ENCODE measurements at regions of chr19 and their contacts with region 1.

Region 1: GRCh38 chr19:40750059-40750873 is at the start of gene ACTMAP:
- DNase-seq: peak; percentile 100
- ATAC-seq: peak; percentile 90
- H3K4me3 Mint-ChIP-seq: peak within 1 kb of the TSS; percentile 94
- H3K27ac Mint-ChIP-seq: peak within 1 kb of the TSS; percentile 99
- H3K4me1 Mint-ChIP-seq: peaks cover 27% of the 10 kb centered on the region
- H3K27me3 Mint-ChIP-seq: no peaks in the 10 kb centered on the region
- CTCF ChIP-seq: no peak
- total RNA-seq, gene ACTMAP: 12.8 to 14.2 TPM

Region 2: DNA sequence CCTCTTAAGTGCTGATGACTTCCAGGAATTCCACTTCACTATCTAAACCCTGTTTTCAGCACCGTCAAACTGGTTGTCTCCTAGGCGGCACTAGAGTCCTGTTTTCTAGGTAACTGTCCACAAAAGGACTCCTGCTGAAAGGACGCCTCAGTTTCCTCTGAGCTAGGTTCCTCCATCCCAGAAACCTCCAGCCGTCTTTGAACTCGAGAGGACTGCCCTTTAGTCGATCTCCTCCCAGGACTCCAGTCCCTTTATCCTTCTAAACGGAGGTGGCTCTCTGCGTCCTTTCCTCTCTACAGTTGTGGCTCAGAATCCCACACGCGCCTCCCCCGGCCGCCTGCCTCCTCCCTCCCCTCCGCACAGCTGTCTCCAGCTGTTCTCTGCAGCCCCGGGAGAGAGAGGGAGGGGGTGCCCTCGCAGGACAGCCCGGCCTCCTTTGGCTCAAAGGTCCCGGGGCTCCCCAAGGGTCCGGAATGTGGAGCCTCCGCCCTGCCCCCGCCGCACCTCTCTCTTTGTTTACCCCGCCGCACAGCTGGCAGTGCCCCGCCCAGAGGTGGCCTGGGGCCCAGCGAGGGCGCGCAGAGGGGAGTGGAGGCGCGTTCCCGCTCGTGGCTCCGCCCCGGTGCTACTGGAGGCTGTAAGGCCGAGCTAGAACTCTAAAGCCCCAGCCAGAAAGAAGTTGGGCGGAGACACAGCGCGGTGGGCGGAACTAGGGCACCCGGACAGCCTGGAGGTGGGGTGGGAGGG is 146.7 kb before region 1 on chr19:
- CTCF ChIA-PET with region 1: no interaction called
- POLR2A ChIA-PET with region 1: no interaction called
- intact Hi-C with region 1: no loop called
- DNase-seq: peak; percentile 99
- ATAC-seq: peak; percentile 78
- H3K4me3 Mint-ChIP-seq: peak overlapping the region; percentile 77
- H3K27ac Mint-ChIP-seq: no peak overlapping the region
- H3K4me1 Mint-ChIP-seq: peaks cover 69% of the 10 kb centered on the region
- H3K27me3 Mint-ChIP-seq: peaks cover 28% of the 10 kb centered on the region
- CTCF ChIP-seq: no peak

Region 3: DNA sequence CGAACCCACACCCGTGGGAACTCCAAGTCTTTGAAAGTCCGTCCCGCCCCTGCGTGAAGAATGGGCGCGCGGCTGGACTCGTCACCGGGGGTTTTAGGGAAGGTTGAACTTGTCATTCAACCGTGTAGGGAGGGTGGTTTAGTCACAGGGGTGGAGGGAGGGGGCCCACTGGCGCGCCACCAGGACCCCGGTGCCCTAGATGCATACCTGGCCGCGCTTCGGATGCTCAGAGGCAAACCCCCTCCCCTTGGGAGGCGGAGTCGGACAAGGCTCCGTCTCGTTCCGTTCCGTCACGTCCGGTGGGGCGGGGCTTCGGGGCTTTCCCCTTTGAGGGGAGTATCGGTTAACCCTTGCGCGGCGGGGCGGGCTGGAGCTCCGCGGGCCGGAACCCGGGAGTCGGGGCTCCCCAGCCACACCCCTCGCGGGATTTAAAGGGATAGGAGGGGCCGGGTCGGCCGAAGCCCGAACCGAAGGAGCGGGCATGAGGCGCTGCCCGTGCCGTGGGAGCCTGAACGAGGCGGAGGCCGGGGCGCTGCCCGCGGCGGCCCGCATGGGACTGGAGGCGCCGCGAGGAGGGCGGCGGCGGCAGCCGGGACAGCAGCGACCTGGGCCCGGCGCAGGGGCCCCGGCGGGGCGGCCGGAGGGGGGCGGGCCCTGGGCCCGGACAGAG is 33.5 kb before region 1 on chr19 and contains the starts of genes COQ8B and ITPKC:
- CTCF ChIA-PET with region 1: no interaction called
- POLR2A ChIA-PET with region 1: interaction called, 14 read pairs
- intact Hi-C with region 1: loop called (anchors 5 kb)
- DNase-seq: peak; percentile 100
- ATAC-seq: peak; percentile 74
- H3K4me3 Mint-ChIP-seq: peak within 1 kb of the TSS; percentile 94
- H3K27ac Mint-ChIP-seq: peak within 1 kb of the TSS; percentile 96
- H3K4me1 Mint-ChIP-seq: peaks cover 50% of the 10 kb centered on the region
- H3K27me3 Mint-ChIP-seq: no peaks in the 10 kb centered on the region
- CTCF ChIP-seq: no peak
- total RNA-seq, gene COQ8B: 23.2 to 24.0 TPM
- total RNA-seq, gene ITPKC: 4.8 to 5.2 TPM

Region 4: GRCh38 chr19:40735003-40735771 is 15.1 kb before region 1 on chr19:
- CTCF ChIA-PET with region 1: no interaction called
- POLR2A ChIA-PET with region 1: no interaction called
- intact Hi-C with region 1: no loop called
- DNase-seq: no peak
- ATAC-seq: no peak
- H3K4me3 Mint-ChIP-seq: no peak overlapping the region
- H3K27ac Mint-ChIP-seq: no peak overlapping the region
- H3K4me1 Mint-ChIP-seq: no peaks in the 10 kb centered on the region
- H3K27me3 Mint-ChIP-seq: no peaks in the 10 kb centered on the region
- CTCF ChIP-seq: no peak

Region 5: GRCh38 chr19:40798223-40798996 is 48.1 kb after region 1 on chr19:
- CTCF ChIA-PET with region 1: interaction called, 4 read pairs
- POLR2A ChIA-PET with region 1: interaction called, 6 read pairs
- intact Hi-C with region 1: loop called (anchors 5 kb)
- DNase-seq: peak; percentile 100
- ATAC-seq: peak; percentile 35
- H3K4me3 Mint-ChIP-seq: peak overlapping the region; percentile 95
- H3K27ac Mint-ChIP-seq: peak overlapping the region; percentile 97
- H3K4me1 Mint-ChIP-seq: peaks cover 51% of the 10 kb centered on the region
- H3K27me3 Mint-ChIP-seq: no peaks in the 10 kb centered on the region
- CTCF ChIP-seq: no peak

Region 6: DNA sequence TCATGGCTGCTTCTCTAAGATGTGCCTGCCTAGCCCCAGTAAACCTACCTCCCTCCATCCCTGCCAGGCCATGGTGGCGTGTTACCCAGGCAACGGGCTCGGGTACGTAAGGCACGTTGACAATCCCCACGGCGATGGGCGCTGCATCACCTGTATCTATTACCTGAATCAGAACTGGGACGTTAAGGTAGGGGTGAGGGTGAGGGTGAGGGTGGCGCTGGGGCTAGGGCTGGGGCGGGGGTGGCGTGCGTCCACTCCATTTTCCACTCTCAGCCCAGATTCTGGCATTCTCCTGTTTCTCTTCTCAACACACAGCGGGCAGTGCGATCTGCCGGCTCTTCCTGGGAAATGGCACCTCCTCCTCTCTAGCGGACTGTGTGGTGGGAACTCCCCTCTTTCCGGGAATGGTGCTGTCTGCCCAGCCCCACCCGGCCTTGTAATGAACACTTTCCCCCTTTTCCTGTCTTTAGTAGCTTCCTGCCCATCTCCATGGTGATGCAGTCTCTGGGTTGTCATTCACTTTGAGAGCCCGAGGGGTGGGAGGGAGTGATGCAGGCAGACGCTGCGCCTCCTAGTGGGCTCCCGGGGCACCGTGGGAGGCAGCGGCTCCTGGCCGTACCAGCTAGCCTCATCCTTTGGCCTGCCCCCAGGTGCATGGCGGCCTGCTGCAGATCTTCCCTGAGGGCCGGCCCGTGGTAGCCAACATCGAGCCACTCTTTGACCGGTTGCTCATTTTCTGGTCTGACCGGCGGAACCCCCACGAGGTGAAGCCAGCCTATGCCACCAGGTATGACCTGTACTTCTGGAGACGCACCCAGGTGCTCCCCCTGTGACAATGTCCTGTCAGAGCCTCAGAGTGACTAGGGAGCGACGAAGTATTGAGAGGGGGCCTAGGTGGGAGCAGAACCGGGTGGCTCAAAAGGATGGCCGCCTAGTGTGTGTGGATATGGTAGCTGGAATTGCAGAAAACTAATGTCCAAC is 56.5 kb after region 1 on chr19:
- CTCF ChIA-PET with region 1: interaction called, 36 read pairs
- POLR2A ChIA-PET with region 1: interaction called, 12 read pairs
- intact Hi-C with region 1: loop called (anchors 5 kb)
- DNase-seq: peak; percentile 90
- ATAC-seq: peak; percentile 49
- H3K4me3 Mint-ChIP-seq: peak overlapping the region; percentile 54
- H3K27ac Mint-ChIP-seq: peak overlapping the region; percentile 88
- H3K4me1 Mint-ChIP-seq: peaks cover 74% of the 10 kb centered on the region
- H3K27me3 Mint-ChIP-seq: no peaks in the 10 kb centered on the region
- CTCF ChIP-seq: peak; percentile 93